ENCODE measurements at regions of chr17 and their contacts with region 1.

Region 1: DNA sequence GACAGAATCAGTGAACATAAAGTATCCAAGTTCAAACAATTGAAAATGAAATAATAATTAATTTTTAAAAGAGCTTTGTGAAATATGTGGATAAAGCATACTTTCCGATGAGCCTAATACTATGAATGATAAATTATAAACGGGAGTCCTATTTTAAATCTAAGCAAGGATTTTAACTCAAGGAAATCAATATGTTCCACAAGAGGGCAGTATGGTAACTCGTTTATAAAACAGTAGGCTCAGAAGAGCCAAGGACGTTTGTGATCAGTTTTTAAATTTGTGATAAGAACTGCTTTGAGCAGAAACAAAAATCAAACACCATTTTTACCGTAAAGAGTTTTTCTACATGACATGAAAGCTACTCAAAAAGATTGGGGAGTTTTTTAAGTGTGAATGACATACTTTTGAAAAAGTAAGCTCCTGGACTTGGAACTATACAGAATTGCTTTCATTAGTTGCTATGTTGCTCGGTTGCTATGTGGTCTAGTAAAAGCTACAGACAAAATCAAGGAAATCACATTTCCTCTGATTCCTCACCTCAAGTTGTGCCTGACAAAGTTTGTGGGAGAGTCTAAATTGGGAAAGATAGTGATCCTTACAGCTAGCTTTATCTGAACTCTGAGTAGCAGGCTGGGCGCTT is 11.8 kb upstream of the TEKT1 start:
- DNase-seq: no peak
- ATAC-seq: no peak
- H3K4me3 Mint-ChIP-seq: no peak overlapping the region
- H3K27ac Mint-ChIP-seq: no peak overlapping the region
- H3K4me1 Mint-ChIP-seq: no peaks in the 10 kb centered on the region
- H3K27me3 Mint-ChIP-seq: peaks cover 37% of the 10 kb centered on the region
- CTCF ChIP-seq: peak; percentile 59

Region 2: DNA sequence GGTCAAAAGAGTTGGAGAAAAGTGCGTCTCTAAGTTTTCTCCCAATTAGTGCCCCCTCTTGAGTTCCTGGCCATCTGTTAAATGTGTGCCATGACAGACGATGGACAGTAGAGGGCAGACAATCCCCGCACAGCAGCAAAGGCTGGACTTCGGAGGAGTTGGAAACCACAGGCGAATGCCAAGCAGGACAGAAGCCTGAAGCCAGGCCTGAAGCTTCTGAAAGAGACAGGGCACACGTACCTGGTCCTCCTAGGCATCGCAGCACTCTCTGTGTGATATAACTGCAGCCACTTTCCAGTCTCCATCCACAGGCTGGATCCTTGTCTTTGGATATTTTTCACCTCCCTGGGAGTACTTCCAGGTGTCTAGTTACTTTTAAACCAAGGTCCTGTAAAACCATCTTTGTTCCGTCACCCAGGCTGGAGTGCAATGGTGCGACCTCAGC is 177.3 kb before region 1 on chr17:
- CTCF ChIA-PET with region 1: interaction called, 17 read pairs
- POLR2A ChIA-PET with region 1: no interaction called
- intact Hi-C with region 1: no loop called
- DNase-seq: peak; percentile 63
- ATAC-seq: peak; percentile 81
- H3K4me3 Mint-ChIP-seq: no peak overlapping the region
- H3K27ac Mint-ChIP-seq: no peak overlapping the region
- H3K4me1 Mint-ChIP-seq: peaks cover 20% of the 10 kb centered on the region
- H3K27me3 Mint-ChIP-seq: no peaks in the 10 kb centered on the region
- CTCF ChIP-seq: peak; percentile 93

Region 3: DNA sequence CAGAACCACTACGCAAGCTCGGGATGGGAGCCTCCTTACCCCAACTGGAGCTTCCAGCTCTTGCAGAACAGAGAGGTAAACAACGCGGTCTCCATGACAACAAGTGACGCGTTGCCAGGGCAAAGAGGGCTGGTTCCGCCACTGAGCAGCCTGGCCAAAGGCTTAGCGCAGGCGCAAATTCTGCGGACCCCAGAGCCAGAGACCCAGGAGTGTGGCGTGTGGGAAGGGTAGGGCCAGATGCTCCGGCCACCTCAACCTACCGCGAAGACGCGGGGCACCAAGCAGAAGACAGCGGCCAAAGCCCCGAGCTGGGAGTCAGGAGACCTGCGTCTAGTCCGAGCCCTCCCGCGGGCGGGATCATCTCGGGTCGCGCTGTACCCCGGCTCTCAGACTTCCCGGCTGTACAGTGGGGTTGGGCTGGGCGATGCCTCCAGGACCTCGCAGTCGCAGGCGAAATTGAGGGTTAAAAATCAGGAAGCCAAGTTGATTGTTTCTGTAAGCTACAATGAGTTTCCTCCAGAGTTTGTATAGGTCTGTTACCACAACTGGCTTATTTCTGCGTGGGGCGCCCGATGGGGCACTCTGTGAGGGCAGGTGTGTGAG is 11.6 kb before region 1 on chr17 and contains the start of gene TEKT1:
- CTCF ChIA-PET with region 1: interaction called, 11 read pairs
- POLR2A ChIA-PET with region 1: no interaction called
- intact Hi-C with region 1: no loop called
- DNase-seq: peak; percentile 79
- ATAC-seq: peak; percentile 80
- H3K4me3 Mint-ChIP-seq: peak within 1 kb of the TSS; percentile 59
- H3K27ac Mint-ChIP-seq: no peak within 1 kb of the TSS
- H3K4me1 Mint-ChIP-seq: peaks cover 12% of the 10 kb centered on the region
- H3K27me3 Mint-ChIP-seq: peaks cover 44% of the 10 kb centered on the region
- CTCF ChIP-seq: no peak
- total RNA-seq, gene TEKT1: not detected

Region 4: DNA sequence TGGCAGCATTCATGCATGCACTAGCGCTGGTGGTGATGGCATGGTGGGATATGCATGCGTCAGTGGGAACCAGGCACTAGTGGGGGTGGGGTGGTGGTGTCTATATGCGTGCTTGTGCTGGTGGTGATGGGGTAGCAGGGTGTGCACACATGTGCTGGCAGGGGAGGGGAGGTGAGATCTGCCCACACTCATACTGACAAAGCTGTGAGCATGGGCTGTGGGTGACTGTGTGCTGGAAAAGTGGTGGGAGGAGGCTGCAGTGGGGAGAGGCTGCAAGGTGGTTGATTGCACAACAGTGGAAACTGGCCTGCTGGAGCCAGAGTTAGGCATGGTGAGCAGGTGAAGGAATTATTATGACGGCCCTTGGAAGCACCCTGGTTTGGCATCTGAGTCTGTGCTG is 19.5 kb after region 1 on chr17:
- CTCF ChIA-PET with region 1: interaction called, 18 read pairs
- POLR2A ChIA-PET with region 1: no interaction called
- intact Hi-C with region 1: no loop called
- DNase-seq: peak; percentile 39
- ATAC-seq: peak; percentile 77
- H3K4me3 Mint-ChIP-seq: no peak overlapping the region
- H3K27ac Mint-ChIP-seq: no peak overlapping the region
- H3K4me1 Mint-ChIP-seq: peaks cover 11% of the 10 kb centered on the region
- H3K27me3 Mint-ChIP-seq: peaks cover 8% of the 10 kb centered on the region
- CTCF ChIP-seq: no peak

Region 5: DNA sequence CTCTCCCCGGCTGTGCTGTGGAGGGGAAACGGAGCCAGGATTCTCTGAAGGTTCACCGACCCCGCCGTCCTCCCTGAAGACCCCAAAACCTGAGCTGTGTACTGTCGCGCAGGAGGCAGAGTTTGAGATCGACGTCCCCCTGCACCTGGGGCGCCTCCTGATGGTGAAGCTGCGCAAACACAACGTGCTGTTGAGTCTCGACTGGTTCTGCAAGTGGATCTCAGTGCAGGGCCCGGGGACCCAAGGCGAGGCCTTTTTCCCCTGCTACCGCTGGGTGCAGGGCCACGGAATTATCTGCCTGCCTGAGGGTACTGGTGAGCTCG is 50.8 kb after region 1 on chr17:
- CTCF ChIA-PET with region 1: interaction called, 53 read pairs
- POLR2A ChIA-PET with region 1: interaction called, 3 read pairs
- intact Hi-C with region 1: no loop called
- DNase-seq: peak; percentile 48
- ATAC-seq: peak; percentile 71
- H3K4me3 Mint-ChIP-seq: no peak overlapping the region
- H3K27ac Mint-ChIP-seq: no peak overlapping the region
- H3K4me1 Mint-ChIP-seq: no peaks in the 10 kb centered on the region
- H3K27me3 Mint-ChIP-seq: peaks cover 29% of the 10 kb centered on the region
- CTCF ChIP-seq: peak; percentile 67

Region 6: GRCh38 chr17:6981426-6981825 is 138.1 kb after region 1 on chr17:
- CTCF ChIA-PET with region 1: no interaction called
- POLR2A ChIA-PET with region 1: no interaction called
- intact Hi-C with region 1: no loop called
- DNase-seq: no peak
- ATAC-seq: no peak
- H3K4me3 Mint-ChIP-seq: no peak overlapping the region
- H3K27ac Mint-ChIP-seq: no peak overlapping the region
- H3K4me1 Mint-ChIP-seq: peaks cover 4% of the 10 kb centered on the region
- H3K27me3 Mint-ChIP-seq: no peaks in the 10 kb centered on the region
- CTCF ChIP-seq: no peak

Region 7: DNA sequence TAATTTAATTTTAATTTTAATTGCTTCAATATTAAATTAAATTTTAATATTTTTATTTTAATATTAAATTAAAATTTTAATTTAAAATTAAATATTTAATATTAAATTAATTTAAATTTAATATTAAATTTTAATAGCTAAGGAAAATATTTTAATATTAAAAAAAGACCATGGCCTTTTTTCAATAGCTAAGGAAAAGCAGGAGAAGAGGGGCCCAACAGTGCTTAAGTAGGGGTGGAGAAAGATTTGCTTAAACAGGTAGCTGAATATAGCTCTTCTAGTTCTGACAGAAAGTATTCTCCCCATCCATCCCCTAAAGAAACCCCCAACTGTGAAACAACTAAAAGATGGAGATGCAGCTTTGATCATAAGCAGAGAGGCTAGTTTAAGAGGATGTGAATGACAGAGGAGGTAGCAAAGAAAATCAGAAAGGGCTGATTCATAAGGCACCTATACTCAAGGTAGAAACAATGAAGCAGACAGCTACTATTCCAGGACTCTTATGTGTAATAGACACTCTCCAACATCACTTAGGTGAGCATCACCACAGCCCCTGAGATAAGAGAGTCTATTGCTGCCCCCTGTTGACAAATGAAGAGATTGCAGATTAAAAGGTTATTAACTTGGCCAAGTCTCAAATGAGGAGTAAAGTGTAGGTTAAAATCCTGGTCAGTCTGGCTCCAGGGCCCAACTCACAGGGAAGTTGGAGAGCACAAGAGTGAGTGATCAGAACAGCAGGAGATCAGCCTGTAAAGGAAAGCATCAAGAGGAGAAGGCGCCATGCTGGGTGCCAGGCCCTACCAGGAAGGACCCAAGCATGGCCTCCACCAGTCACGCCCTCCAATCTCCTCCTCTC is 161.3 kb after region 1 on chr17:
- CTCF ChIA-PET with region 1: interaction called, 31 read pairs
- POLR2A ChIA-PET with region 1: interaction called, 3 read pairs
- intact Hi-C with region 1: no loop called
- DNase-seq: peak; percentile 52
- ATAC-seq: peak; percentile 95
- H3K4me3 Mint-ChIP-seq: no peak overlapping the region
- H3K27ac Mint-ChIP-seq: no peak overlapping the region
- H3K4me1 Mint-ChIP-seq: peaks cover 21% of the 10 kb centered on the region
- H3K27me3 Mint-ChIP-seq: no peaks in the 10 kb centered on the region
- CTCF ChIP-seq: peak; percentile 90

Measured in activated CD8-positive, alpha-beta T cell treated with anti-CD3 and anti-CD28 coated beads for 36 hours (primary cell).